ENCODE measurements at regions of chr3 and their contacts with region 1.

Region 1: GRCh38 chr3:105366326-105367062 is at the start of gene ALCAM:
- DNase-seq: peak; percentile 91
- H3K4me3 ChIP-seq: peak within 1 kb of the TSS; percentile 74
- H3K27ac ChIP-seq: peak within 1 kb of the TSS; percentile 92
- H3K4me1 ChIP-seq: peaks cover 27% of the 10 kb centered on the region
- CTCF ChIP-seq: peak; percentile 46; the same call in 1 of the 2 replicates
- total RNA-seq, gene ALCAM: 40.4 and 51.3 TPM in 2 replicates

Region 2: GRCh38 chr3:104273046-104273649 is 1093.3 kb before region 1 on chr3:
- CTCF ChIA-PET with region 1: no interaction called
- POLR2A ChIA-PET with region 1: no interaction called
- intact Hi-C with region 1: loop called (anchors 5 kb)
- DNase-seq: peak; percentile 37
- H3K4me3 ChIP-seq: no peak overlapping the region
- H3K27ac ChIP-seq: no peak overlapping the region
- H3K4me1 ChIP-seq: no peaks in the 10 kb centered on the region
- CTCF ChIP-seq: peak; percentile 94

Region 3: DNA sequence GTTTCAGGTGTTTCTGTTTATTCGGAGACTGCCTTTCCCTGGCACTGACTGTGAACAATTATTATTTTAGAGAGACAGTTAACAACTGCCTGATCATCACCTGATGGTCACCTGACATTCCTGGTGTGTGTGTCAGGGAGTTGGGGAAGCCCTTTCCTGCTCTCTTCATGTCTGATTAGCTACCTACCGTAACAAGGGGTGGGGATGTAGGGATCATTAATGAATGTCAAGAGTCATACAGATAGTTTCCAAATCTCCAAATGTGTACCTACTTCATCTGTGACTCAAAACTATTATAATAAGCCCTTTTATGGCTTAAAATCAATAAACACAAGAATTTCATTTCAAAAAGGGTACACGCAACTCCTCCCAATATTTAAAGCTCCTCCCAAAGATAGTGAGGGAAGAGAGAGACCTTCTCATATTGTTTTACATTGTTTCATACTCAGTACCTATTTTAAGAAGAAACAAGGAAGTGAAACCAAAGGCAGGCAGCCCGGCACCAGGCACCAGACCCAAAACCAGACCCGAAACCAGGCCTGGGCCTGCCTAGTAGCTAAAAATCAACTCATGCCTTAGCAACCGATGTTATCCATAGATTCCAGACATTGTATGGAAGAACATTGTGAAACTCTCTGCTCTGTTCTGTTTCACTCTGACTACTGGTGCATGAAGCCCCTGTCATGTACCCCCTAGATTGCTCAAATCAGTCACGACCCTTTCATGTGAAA is 844.7 kb before region 1 on chr3:
- CTCF ChIA-PET with region 1: no interaction called
- POLR2A ChIA-PET with region 1: interaction called, 11 read pairs
- intact Hi-C with region 1: loop called (anchors 2 kb)
- DNase-seq: peak; percentile 79
- H3K4me3 ChIP-seq: peak overlapping the region; percentile 67
- H3K27ac ChIP-seq: peak overlapping the region; percentile 96
- H3K4me1 ChIP-seq: peaks cover 86% of the 10 kb centered on the region
- CTCF ChIP-seq: no peak

Region 4: DNA sequence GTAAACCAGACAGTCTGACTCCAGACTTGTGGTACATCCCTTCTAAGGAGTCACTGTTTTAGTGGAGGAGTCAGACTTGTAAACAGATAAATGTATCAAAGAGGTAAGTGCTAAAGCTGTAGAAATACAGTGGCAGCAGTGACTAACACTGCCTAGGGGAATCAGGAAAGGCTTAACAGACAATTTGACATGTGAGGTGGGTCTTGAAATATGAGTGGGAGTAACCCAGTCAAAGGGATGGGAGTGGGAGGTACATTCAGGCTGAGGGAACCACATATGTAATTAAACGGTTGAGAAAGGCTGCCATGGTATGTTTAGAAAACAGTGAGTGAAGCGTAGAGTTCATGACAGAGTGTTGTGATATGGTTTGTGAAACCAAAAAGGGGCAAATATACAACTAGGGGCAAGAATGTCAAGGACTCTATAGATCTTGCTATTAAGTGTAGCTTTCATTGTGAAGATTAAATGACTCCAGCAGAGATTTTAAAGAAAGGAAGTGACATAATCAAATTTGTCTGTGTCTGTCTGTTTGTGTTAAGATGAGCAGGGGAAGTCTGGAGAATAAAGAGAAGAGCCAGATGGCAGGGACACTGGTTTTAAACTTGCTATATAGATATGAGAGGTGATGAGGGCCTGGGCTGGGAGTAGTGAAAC is 11.0 kb before region 1 on chr3:
- CTCF ChIA-PET with region 1: no interaction called
- POLR2A ChIA-PET with region 1: interaction called, 15 read pairs
- intact Hi-C with region 1: no loop called
- DNase-seq: no peak
- H3K4me3 ChIP-seq: no peak overlapping the region
- H3K27ac ChIP-seq: no peak overlapping the region
- H3K4me1 ChIP-seq: no peaks in the 10 kb centered on the region
- CTCF ChIP-seq: no peak

Region 5: GRCh38 chr3:105397974-105398373 is 31.5 kb after region 1 on chr3:
- CTCF ChIA-PET with region 1: no interaction called
- POLR2A ChIA-PET with region 1: interaction called, 11 read pairs
- intact Hi-C with region 1: no loop called
- DNase-seq: no peak
- H3K4me3 ChIP-seq: no peak overlapping the region
- H3K27ac ChIP-seq: no peak overlapping the region
- H3K4me1 ChIP-seq: no peaks in the 10 kb centered on the region
- CTCF ChIP-seq: no peak

Region 6: DNA sequence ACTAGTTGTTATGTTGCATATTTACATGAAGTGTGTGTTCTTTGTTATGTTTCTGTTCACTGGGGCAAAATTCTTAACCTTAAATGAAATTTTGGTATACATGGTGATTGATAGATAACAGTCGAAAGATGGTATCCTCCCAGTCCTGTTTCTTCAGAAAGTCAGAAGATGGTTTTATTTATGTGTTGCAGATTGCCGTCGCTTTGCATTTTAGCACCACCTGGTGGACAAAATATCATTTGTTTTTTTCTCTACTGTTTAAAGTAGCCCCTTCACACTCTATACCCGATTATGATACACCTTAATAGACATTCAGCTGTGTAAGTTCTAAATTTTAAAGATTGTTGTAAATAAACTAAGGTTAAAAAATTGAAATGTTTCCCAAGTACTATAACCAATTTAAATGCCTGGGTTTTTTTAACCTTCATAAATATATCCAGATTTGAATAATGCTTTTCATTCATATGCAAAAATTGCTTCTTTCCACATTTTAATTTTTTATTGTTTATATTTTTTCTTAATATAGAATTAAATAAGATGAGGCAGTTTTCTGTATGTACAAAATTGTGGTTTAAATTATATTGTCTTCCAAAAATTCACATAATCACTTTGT is 152.4 kb after region 1 on chr3:
- CTCF ChIA-PET with region 1: no interaction called
- POLR2A ChIA-PET with region 1: interaction called, 6 read pairs
- intact Hi-C with region 1: loop called (anchors 1 kb)
- DNase-seq: peak; percentile 71
- H3K4me3 ChIP-seq: no peak overlapping the region
- H3K27ac ChIP-seq: no peak overlapping the region
- H3K4me1 ChIP-seq: no peaks in the 10 kb centered on the region
- CTCF ChIP-seq: peak; percentile 91